ENCODE measurements at regions of chr1 and their contacts with region 1.

Region 1: GRCh38 chr1:85406887-85407533 is 57.9 kb downstream of the DDAH1 start:
- DNase-seq: peak; percentile 16 to 32
- ATAC-seq: peak; percentile 93

Region 2: GRCh38 chr1:85464497-85465098 is 57.6 kb after region 1 on chr1:
- intact Hi-C with region 1: loop called in 1 of 2 experiments (anchors 10 kb)
- DNase-seq: peak; percentile 78 to 81
- ATAC-seq: peak; percentile 75

Measured in left colon (tissue), 2 donors.